Mammary epithelial cell (primary cell): ENCODE measurements at regions of chr9 and their contacts with region 1.

Region 1: DNA sequence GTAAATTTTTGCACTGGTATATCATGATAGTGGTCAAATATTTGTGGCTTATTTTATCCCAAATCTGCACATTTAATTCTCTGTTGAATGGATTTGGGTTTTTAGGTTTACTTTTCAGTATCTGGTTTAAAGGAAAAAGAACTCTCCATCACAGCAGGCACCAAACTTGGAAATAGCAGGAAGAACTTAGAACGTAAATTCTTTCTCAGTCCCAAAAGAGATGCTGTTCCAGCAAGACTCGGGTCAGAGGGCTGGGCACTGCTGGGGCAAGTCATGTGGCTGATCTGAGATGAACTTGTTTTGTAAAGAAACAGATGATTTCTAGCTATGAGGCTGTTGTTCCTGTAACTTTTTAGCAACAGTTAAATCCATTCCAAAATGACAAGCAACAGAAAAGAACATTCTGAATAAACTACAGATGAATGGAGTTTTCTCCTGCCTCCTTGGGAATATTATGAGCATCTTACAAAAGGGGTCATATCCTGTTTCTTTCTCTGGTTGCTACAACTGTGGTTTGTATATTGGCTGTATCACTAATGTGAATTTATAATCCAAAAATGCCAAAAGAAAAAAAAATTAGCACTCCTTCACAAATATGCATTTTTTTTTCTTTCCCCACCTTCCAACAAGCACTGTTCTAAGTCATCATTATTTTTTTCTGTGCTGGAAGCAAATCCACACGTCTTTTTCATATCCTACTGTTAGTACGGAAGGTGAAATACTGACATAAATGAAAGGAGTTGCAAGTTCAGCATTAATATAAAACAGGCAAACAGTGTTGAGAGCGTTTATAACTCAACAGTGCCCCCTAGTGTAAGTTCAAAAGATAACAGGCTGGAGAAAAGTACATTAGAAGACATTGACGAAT is 31.1 kb downstream of the OR2K2 start:
- DNase-seq: peak; percentile 39
- H3K4me3 ChIP-seq: no peak overlapping the region
- H3K27ac ChIP-seq: no peak overlapping the region
- H3K4me1 ChIP-seq: no peaks in the 10 kb centered on the region
- H3K27me3 ChIP-seq: no peaks in the 10 kb centered on the region
- CTCF ChIP-seq: peak; percentile 62 to 68

Region 2: DNA sequence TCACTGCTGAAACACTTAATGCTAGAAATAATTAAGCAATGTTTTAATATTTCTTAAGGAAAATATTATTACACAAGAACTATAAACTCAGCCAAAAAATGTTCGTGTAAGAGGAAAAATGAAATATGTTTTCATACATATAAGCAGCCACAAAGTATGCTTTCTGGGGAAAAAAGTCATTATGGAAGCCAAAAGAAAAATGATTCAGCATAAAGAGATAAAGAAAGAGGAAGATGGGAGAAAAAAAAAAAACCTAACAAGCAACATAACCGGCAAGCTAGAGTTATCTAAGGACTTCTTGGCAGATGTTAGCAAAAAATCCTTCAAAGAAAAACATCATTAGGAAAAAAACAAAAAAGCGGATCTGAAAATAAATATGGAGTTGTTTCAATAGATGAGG is 451.3 kb before region 1 on chr9:
- CTCF ChIA-PET with region 1: no interaction called
- dilution Hi-C with region 1: no loop called
- in situ Hi-C with region 1: no loop called
- intact Hi-C with region 1: loop called (anchors 10 kb)
- DNase-seq: no peak
- H3K4me3 ChIP-seq: no peak overlapping the region
- H3K27ac ChIP-seq: no peak overlapping the region
- H3K4me1 ChIP-seq: no peaks in the 10 kb centered on the region
- H3K27me3 ChIP-seq: no peaks in the 10 kb centered on the region
- CTCF ChIP-seq: no peak

Region 3: DNA sequence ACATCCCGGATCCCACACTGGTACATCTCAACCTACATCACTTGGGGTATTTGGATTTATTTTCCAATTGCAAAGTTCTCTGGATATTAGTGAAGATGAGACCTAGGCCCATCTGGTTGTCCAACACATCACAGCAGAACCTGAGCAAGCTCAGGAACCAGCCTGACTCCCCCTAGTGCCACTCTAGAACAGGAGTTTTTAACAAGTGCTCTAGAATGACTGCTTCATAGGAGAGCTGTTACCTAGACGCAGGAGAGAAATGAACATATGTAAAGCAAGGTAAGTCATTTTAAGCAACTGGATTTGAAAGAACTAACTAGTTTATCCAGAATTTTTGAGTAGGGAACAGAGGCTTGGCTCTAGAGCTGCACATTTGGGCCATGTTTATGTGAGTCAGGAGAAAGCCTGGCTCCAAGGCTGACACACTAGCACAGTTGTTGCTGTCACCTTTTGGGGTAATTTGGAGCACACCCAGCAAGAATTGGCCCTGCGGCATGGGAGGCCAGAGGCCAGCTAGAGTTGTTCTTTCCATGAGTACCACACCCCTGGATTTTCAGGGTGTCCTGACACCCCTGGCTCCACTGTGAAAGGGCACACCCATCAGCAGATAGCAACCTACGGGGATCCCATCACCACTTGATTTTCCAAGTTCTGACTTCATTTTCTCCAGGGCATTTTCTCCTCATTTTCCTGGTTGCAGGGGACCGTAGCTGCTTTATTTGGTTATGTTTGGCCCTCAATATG is 149.8 kb before region 1 on chr9:
- CTCF ChIA-PET with region 1: no interaction called
- dilution Hi-C with region 1: no loop called
- in situ Hi-C with region 1: no loop called
- intact Hi-C with region 1: loop called (anchors 10 kb)
- DNase-seq: no peak
- H3K4me3 ChIP-seq: no peak overlapping the region
- H3K27ac ChIP-seq: no peak overlapping the region
- H3K4me1 ChIP-seq: no peaks in the 10 kb centered on the region
- H3K27me3 ChIP-seq: no peaks in the 10 kb centered on the region
- CTCF ChIP-seq: peak in 1 of 2 donors; percentile 38